BJ (cell line): ENCODE measurements at regions of chr15 and their contacts with region 1.

Region 1: GRCh38 chr15:65400760-65401610 is 21.8 kb downstream of the IGDCC4 start:
- DNase-seq: no peak
- H3K4me3 ChIP-seq: no peak overlapping the region
- H3K27me3 ChIP-seq: no peaks in the 10 kb centered on the region; the same call in 1 of the 2 replicates
- CTCF ChIP-seq: peak; percentile 91

Region 2: GRCh38 chr15:65318870-65319356 is 82.1 kb before region 1 on chr15:
- CTCF ChIA-PET with region 1: interaction called, 84 read pairs
- POLR2A ChIA-PET with region 1: no interaction called
- DNase-seq: peak; percentile 16
- H3K4me3 ChIP-seq: no peak overlapping the region
- H3K27me3 ChIP-seq: peaks cover 9% of the 10 kb centered on the region
- CTCF ChIP-seq: peak; percentile 73

Region 3: DNA sequence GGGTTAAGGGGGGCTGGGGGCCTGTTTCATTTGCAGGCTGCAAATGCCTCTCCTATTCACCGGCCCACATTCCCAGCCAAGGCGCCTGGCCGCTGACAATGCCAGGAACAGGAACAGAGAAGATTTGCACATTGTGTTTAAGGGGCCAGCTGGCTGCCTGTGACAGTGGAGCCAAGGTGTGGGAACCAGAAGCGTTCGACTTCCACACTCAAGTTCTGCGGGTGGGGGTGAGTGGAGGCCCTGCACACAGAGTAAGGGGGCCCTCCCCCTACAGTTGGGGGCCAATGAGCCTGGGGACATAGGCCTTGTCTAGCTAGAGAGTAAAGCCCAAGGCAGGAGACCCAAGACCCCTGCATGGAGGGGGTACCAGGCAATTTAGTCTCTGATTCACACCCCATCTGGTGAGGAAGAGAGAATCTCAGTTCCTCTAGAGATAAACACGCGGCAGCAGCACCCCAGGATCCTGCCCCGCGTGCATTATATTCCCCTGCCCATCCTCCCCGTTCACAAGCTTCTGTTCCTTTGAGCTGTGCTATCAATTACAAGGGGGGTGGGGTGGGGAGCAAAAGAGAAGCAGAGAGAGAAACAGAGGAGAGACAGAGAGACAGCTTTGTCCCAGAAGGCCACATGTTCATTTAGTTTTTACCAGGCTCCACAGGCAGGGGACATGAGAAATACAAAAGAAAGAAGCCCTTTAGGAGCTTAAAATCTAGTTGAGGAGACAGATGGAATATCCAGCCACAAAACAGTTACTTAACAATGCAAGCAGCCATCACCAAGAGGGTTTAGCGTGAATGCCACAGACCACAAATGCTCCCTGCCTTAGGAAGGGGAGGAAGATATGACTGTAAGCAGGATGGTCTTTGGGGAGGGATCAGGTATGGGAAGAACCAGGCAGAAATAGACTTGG is 32.4 kb before region 1 on chr15:
- CTCF ChIA-PET with region 1: interaction called, 15 read pairs
- POLR2A ChIA-PET with region 1: no interaction called
- DNase-seq: no peak
- H3K4me3 ChIP-seq: no peak overlapping the region
- H3K27me3 ChIP-seq: peaks cover 12% of the 10 kb centered on the region
- CTCF ChIP-seq: no peak

Region 4: DNA sequence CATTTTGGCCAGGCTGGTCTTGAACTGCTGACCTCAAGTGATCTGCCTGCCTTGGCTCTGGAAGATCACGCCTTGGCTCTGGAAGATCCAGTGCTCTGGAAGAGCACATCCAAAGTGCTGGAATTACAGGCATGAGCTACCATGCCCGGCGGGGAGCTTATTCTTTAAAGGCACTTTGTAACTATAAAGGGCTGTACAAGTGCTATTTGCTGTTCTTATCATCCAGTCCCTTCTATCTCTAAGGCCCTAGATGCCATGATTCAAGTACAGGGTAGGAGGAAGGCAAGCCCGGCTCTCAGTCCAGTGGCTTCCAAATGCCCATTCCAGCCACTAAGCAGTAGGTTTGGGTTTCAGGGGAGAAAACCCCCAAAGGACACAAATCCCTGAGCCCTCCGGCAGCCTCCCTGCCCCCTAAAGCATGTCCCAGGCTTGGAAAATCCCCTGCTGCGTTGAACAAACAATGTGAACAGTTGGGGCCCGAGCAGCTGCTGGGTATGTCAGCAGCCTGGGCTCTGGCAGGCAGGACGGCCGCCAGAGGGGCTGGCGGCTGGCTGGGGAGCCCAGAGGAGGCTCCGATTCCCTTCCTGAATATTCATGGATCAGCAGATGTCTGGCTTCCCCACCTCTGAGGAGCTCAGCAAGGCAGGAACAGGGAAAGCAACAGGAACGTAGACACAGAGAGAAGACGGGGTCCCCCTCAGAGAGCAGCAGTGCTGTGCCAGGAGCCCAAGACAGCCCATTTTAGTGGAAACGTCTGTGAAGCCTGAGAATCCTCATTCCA is 14.0 kb after region 1 on chr15:
- CTCF ChIA-PET with region 1: interaction called, 50 read pairs
- POLR2A ChIA-PET with region 1: no interaction called
- DNase-seq: no peak
- H3K4me3 ChIP-seq: no peak overlapping the region
- H3K27me3 ChIP-seq: peaks cover 15% of the 10 kb centered on the region
- CTCF ChIP-seq: no peak

Region 5: GRCh38 chr15:65431731-65432130 is 30.7 kb after region 1 on chr15:
- CTCF ChIA-PET with region 1: interaction called, 65 read pairs
- POLR2A ChIA-PET with region 1: no interaction called
- DNase-seq: no peak
- H3K4me3 ChIP-seq: no peak overlapping the region
- H3K27me3 ChIP-seq: no peaks in the 10 kb centered on the region
- CTCF ChIP-seq: no peak